ENCODE measurements at regions of chr1 and their contacts with region 1.

Region 1: DNA sequence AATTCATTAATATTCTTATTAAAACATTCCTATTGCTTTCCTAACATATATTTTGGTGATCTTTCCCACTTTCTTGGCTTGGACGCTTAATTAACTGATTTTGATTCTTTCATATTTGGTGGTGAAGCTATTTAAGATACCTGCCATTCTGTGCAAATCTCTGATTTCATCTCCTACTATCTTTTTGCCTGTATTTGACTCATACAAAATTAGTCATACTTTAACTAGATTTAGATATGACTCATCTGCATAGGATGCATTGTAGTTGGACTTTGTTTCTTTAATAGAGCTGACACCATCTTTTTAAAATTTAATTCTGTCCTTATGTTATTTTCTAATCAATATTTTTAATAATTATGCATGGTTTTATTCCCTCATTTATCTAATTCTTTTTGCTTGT is 93.8 kb upstream of the PLPPR4 start:
- DNase-seq: no peak
- H3K4me3 ChIP-seq: no peak overlapping the region
- H3K27ac ChIP-seq: no peak overlapping the region
- H3K4me1 ChIP-seq: no peaks in the 10 kb centered on the region
- H3K27me3 ChIP-seq: no peaks in the 10 kb centered on the region
- CTCF ChIP-seq: no peak
- POLR2A ChIP-seq: no peak

Region 2: DNA sequence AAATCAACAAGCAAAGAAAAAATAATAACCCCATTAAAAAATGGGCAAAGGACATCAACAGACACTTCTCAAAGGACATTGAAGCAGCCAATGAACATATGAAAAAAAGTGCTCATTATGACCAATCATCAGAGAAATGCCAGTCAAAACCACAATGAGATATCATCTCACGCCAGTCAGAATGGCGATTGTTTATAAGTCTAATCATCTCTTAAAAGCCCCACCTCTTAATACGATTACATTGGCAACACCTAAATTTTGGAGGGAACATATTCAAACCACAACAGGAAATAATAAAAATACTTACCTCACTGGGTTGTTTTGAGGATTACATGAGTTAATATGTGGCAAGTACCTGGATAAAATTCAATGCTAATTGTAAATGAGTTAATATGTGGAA is 36.7 kb after region 1 on chr1:
- intact Hi-C with region 1: no loop called
- DNase-seq: no peak
- H3K4me3 ChIP-seq: no peak overlapping the region
- H3K27ac ChIP-seq: no peak overlapping the region
- H3K4me1 ChIP-seq: no peaks in the 10 kb centered on the region
- H3K27me3 ChIP-seq: no peaks in the 10 kb centered on the region
- CTCF ChIP-seq: no peak
- POLR2A ChIP-seq: no peak

Region 3: GRCh38 chr1:99374109-99374508 is 203.6 kb after region 1 on chr1:
- intact Hi-C with region 1: no loop called
- DNase-seq: no peak
- H3K4me3 ChIP-seq: no peak overlapping the region
- H3K27ac ChIP-seq: no peak overlapping the region
- H3K4me1 ChIP-seq: no peaks in the 10 kb centered on the region
- H3K27me3 ChIP-seq: no peaks in the 10 kb centered on the region
- CTCF ChIP-seq: no peak
- POLR2A ChIP-seq: no peak

Region 4: GRCh38 chr1:99717005-99717404 is 546.5 kb after region 1 on chr1:
- intact Hi-C with region 1: loop called (anchors 10 kb)
- DNase-seq: no peak
- H3K4me3 ChIP-seq: no peak overlapping the region
- H3K27ac ChIP-seq: no peak overlapping the region
- H3K4me1 ChIP-seq: no peaks in the 10 kb centered on the region
- H3K27me3 ChIP-seq: no peaks in the 10 kb centered on the region
- CTCF ChIP-seq: no peak
- POLR2A ChIP-seq: no peak

Measured in esophagus squamous epithelium (tissue), 5 donors.